Endothelial cell of umbilical vein (primary cell): ENCODE measurements at regions of chr6 and their contacts with region 1.

Region 1: GRCh38 chr6:53171605-53172446 is 23.2 kb upstream of the GCM1 start:
- DNase-seq: peak; percentile 80
- H3K4me3 ChIP-seq: no peak overlapping the region
- H3K27ac ChIP-seq: no peak overlapping the region
- H3K4me1 ChIP-seq: no peaks in the 10 kb centered on the region
- H3K27me3 ChIP-seq: peaks cover 3 to 4% of the 10 kb centered on the region in 2 experiments
- CTCF ChIP-seq: peak; percentile 100
- POLR2A ChIP-seq: no peak

Region 2: DNA sequence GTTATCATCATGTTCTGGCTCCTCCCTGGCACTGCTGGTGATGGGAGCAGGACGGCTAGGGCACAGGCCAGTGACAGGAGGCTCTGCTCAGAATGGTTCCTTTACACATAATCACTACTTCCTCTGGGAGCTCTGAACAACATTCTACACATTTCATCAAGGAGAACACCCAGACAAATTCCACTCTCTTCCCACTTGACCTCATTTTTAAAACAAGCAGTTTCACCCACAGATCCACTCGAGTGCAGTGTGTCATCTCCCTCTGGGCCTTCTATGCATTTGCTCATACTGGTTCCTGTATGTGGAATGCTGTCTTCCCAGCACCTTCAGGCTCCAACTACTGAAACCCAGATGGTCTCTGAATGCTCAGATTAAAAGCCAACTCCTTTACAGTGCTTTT is 92.1 kb after region 1 on chr6:
- CTCF ChIA-PET with region 1: no interaction called
- POLR2A ChIA-PET with region 1: no interaction called
- dilution Hi-C with region 1: no loop called
- intact Hi-C with region 1: loop called (anchors 10 kb)
- DNase-seq: no peak
- H3K4me3 ChIP-seq: no peak overlapping the region
- H3K27ac ChIP-seq: no peak overlapping the region
- H3K4me1 ChIP-seq: no peaks in the 10 kb centered on the region
- H3K27me3 ChIP-seq: no peaks in the 10 kb centered on the region
- CTCF ChIP-seq: no peak
- POLR2A ChIP-seq: no peak

Region 3: GRCh38 chr6:53300656-53301551 is 129.1 kb after region 1 on chr6:
- CTCF ChIA-PET with region 1: no interaction called
- POLR2A ChIA-PET with region 1: no interaction called
- dilution Hi-C with region 1: no loop called
- intact Hi-C with region 1: loop called (anchors 5 kb)
- DNase-seq: peak; percentile 53
- H3K4me3 ChIP-seq: no peak overlapping the region
- H3K27ac ChIP-seq: peak overlapping the region; percentile 99
- H3K4me1 ChIP-seq: peaks cover 58% of the 10 kb centered on the region
- H3K27me3 ChIP-seq: no peaks in the 10 kb centered on the region
- CTCF ChIP-seq: no peak
- POLR2A ChIP-seq: no peak

Region 4: DNA sequence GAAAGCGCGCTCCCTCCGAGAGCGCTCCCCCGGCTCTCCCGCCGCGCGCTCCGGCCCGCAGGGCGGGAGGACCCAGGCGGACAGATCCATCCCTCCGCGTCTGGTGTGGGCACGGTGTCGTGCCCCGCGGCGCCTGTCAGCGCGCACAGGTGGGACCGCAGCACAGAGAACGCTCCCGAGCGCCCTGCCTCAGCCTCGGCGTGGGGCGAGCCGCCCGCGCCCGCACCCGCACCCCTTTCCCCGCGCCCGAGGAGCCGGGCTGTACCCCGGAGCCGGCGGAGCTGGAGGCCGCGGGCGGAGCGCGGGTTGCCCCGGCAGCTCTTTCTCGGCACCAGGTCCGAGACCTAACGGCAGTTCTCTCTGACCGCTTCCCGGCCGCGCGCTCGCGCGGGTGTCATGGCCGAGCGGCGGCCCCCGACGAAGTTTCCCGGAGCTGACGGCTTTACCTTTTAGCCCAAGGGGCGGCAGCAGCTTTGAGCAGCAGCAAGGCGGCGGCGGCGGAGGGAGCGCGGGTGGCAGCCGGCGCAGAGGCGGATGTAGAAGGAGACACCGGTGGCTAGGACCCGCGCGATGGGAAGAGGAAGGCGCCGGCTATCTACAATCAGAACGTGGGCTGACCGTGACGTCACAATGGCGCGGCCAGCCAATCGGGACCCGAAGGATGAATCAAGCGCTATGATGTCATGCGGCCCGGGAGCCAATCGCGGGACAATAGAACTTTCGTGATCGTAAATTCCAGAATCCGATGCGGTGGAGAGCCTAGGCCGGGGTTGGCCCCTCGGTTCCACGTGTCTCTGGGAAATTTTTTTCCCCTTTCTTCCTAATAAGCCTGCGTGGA is 176.8 kb after region 1 on chr6 and contains the start of gene ELOVL5:
- CTCF ChIA-PET with region 1: interaction called, 3 read pairs
- POLR2A ChIA-PET with region 1: no interaction called
- dilution Hi-C with region 1: no loop called
- intact Hi-C with region 1: loop called (anchors 1 kb)
- DNase-seq: peak; percentile 98
- H3K4me3 ChIP-seq: peak within 1 kb of the TSS; percentile 87 to 97 (median 88)
- H3K27ac ChIP-seq: peak within 1 kb of the TSS; percentile 96
- H3K4me1 ChIP-seq: peaks cover 12% of the 10 kb centered on the region
- H3K27me3 ChIP-seq: peaks cover 5 to 14% of the 10 kb centered on the region in 2 experiments
- CTCF ChIP-seq: no peak
- POLR2A ChIP-seq: no peak
- total RNA-seq, gene ELOVL5: 140 and 149 TPM in 2 replicates

Region 5: GRCh38 chr6:53410508-53411258 is 238.9 kb after region 1 on chr6:
- CTCF ChIA-PET with region 1: interaction called, 83 read pairs
- POLR2A ChIA-PET with region 1: no interaction called
- dilution Hi-C with region 1: no loop called
- intact Hi-C with region 1: loop called (anchors 1 kb)
- DNase-seq: peak; percentile 56
- H3K4me3 ChIP-seq: no peak overlapping the region
- H3K27ac ChIP-seq: no peak overlapping the region
- H3K4me1 ChIP-seq: no peaks in the 10 kb centered on the region
- H3K27me3 ChIP-seq: peaks cover 9 to 16% of the 10 kb centered on the region in 2 experiments
- CTCF ChIP-seq: peak; percentile 55 to 61
- POLR2A ChIP-seq: no peak

Region 6: GRCh38 chr6:53437557-53438202 is 265.9 kb after region 1 on chr6:
- CTCF ChIA-PET with region 1: interaction called, 30 read pairs
- POLR2A ChIA-PET with region 1: no interaction called
- dilution Hi-C with region 1: no loop called
- intact Hi-C with region 1: loop called (anchors 1 kb)
- DNase-seq: peak; percentile 64
- H3K4me3 ChIP-seq: no peak overlapping the region
- H3K27ac ChIP-seq: no peak overlapping the region
- H3K4me1 ChIP-seq: no peaks in the 10 kb centered on the region
- H3K27me3 ChIP-seq: peaks cover 3 to 4% of the 10 kb centered on the region in 2 experiments
- CTCF ChIP-seq: peak; percentile 59 to 68
- POLR2A ChIP-seq: no peak

Region 7: GRCh38 chr6:53651764-53652401 is 480.1 kb after region 1 on chr6:
- CTCF ChIA-PET with region 1: no interaction called
- POLR2A ChIA-PET with region 1: no interaction called
- dilution Hi-C with region 1: no loop called
- intact Hi-C with region 1: loop called (anchors 5 kb)
- DNase-seq: peak; percentile 64
- H3K4me3 ChIP-seq: peak overlapping the region in 2 of 3 experiments; percentile 42 to 48
- H3K27ac ChIP-seq: no peak overlapping the region
- H3K4me1 ChIP-seq: peaks cover 5% of the 10 kb centered on the region
- H3K27me3 ChIP-seq: peaks cover 9 to 10% of the 10 kb centered on the region in 2 experiments
- CTCF ChIP-seq: peak in 1 of 2 donors; percentile 48
- POLR2A ChIP-seq: no peak

Region 8: DNA sequence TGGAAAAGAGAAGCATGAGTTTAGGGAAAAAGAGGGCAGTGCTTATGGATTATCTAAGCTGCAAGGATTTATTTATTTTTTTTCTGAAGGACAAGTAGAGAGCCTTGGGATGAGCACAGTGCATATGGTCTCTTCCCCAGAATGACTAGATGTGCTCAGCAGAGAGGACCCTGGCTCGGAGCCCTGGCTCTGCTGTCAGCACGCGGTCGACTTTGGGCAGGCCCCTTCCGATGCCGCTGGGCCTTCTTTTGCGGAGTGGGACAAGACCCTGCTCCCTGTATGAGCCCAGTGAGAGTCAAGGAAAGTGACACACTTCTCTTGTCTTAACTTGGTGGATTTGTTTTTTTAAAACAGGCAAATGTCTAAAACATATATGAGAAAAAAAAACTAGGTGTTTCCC is 674.4 kb after region 1 on chr6:
- CTCF ChIA-PET with region 1: no interaction called
- POLR2A ChIA-PET with region 1: no interaction called
- dilution Hi-C with region 1: no loop called
- intact Hi-C with region 1: no loop called
- DNase-seq: no peak
- H3K4me3 ChIP-seq: no peak overlapping the region
- H3K27ac ChIP-seq: no peak overlapping the region
- H3K4me1 ChIP-seq: no peaks in the 10 kb centered on the region
- H3K27me3 ChIP-seq: no peaks in the 10 kb centered on the region
- CTCF ChIP-seq: no peak
- POLR2A ChIP-seq: no peak